ENCODE measurements at regions of chr15 and their contacts with region 1.

Region 1: GRCh38 chr15:74950078-74951000 is 6.2 kb downstream of the RPP25 start:
- DNase-seq: peak; percentile 82
- H3K4me3 ChIP-seq: no peak overlapping the region
- H3K27ac ChIP-seq: no peak overlapping the region
- H3K4me1 ChIP-seq: peaks cover 12% of the 10 kb centered on the region
- H3K27me3 ChIP-seq: no peaks in the 10 kb centered on the region
- CTCF ChIP-seq: peak; percentile 91 to 97
- POLR2A ChIP-seq: no peak

Region 2: GRCh38 chr15:74422650-74423430 is 527.5 kb before region 1 on chr15:
- CTCF ChIA-PET with region 1: no interaction called
- POLR2A ChIA-PET with region 1: no interaction called
- dilution Hi-C with region 1: no loop called
- intact Hi-C with region 1: no loop called
- DNase-seq: no peak
- H3K4me3 ChIP-seq: no peak overlapping the region
- H3K27ac ChIP-seq: no peak overlapping the region
- H3K4me1 ChIP-seq: no peaks in the 10 kb centered on the region
- H3K27me3 ChIP-seq: no peaks in the 10 kb centered on the region
- CTCF ChIP-seq: no peak
- POLR2A ChIP-seq: no peak

Region 3: GRCh38 chr15:74635228-74635627 is 315.1 kb before region 1 on chr15:
- CTCF ChIA-PET with region 1: interaction called, 17 read pairs
- POLR2A ChIA-PET with region 1: no interaction called
- dilution Hi-C with region 1: no loop called
- intact Hi-C with region 1: loop called (anchors 1 kb)
- DNase-seq: peak; percentile 76
- H3K4me3 ChIP-seq: no peak overlapping the region
- H3K27ac ChIP-seq: no peak overlapping the region
- H3K4me1 ChIP-seq: no peaks in the 10 kb centered on the region
- H3K27me3 ChIP-seq: no peaks in the 10 kb centered on the region
- CTCF ChIP-seq: peak; percentile 82 to 89
- POLR2A ChIP-seq: no peak

Region 4: GRCh38 chr15:74799856-74800547 is 150.3 kb before region 1 on chr15:
- CTCF ChIA-PET with region 1: interaction called, 4 read pairs
- POLR2A ChIA-PET with region 1: no interaction called
- dilution Hi-C with region 1: no loop called
- intact Hi-C with region 1: loop called (anchors 1 kb)
- DNase-seq: peak; percentile 52
- H3K4me3 ChIP-seq: no peak overlapping the region
- H3K27ac ChIP-seq: no peak overlapping the region
- H3K4me1 ChIP-seq: no peaks in the 10 kb centered on the region
- H3K27me3 ChIP-seq: no peaks in the 10 kb centered on the region
- CTCF ChIP-seq: peak; percentile 93 to 98
- POLR2A ChIP-seq: no peak

Region 5: DNA sequence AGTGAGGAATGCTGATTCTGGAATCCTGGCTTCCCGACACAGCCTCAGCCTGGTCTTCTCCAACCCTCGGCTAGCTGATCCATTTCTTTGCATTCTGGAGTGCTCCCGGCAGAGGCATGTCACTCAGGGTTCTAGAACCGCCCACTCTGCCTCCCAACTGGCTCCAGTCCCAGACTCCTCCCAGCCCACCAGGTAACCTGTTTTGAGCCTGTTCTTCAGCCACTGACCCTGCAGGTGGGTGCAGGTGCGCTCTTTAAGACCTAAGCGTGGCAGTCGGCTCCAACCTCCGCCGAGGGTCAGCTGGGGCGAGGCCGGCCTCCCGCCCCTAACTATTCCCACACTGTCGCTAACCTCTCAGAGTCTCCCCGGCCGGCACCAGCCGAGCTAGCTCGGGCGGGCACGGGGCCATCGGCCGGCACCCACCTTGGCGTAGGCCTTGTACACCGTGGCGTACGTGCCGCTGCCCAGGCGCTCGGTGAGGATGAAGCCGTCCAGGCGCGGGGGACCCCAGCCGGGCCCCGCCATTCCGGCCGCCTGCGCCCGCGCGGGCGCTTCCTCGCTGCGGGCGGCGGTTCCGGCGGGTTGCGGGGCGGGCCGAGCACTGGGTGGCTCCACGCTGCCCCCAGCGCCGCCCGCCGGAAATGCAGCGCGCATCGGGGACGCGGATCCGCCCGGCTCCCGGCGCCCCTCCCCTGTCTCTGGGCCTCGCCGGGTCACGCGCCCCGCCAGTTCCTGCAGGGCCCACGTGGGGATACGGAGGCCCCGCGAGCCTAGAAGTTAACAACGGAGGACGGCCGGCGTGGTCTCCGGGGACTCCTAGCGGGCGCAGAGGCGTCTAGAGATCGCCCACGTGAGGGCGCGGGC is 107.5 kb before region 1 on chr15 and contains the start of gene ULK3:
- CTCF ChIA-PET with region 1: interaction called, 6 read pairs
- POLR2A ChIA-PET with region 1: no interaction called
- dilution Hi-C with region 1: no loop called
- intact Hi-C with region 1: loop called (anchors 2 kb)
- DNase-seq: peak; percentile 81
- H3K4me3 ChIP-seq: peak within 1 kb of the TSS; percentile 61 to 81 (median 71)
- H3K27ac ChIP-seq: peak within 1 kb of the TSS; percentile 60
- H3K4me1 ChIP-seq: peaks cover 11% of the 10 kb centered on the region
- H3K27me3 ChIP-seq: no peaks in the 10 kb centered on the region
- CTCF ChIP-seq: peak; percentile 36 to 57
- POLR2A ChIP-seq: peak; percentile 88
- total RNA-seq, gene ULK3: 29.0 and 36.0 TPM in 2 replicates

Region 6: GRCh38 chr15:74937596-74938296 is 12.6 kb before region 1 on chr15 and contains the start of gene COX5A:
- CTCF ChIA-PET with region 1: interaction called, 13 read pairs
- POLR2A ChIA-PET with region 1: no interaction called
- dilution Hi-C with region 1: no loop called
- intact Hi-C with region 1: loop called (anchors 1 kb)
- DNase-seq: peak; percentile 98
- H3K4me3 ChIP-seq: peak within 1 kb of the TSS; percentile 92 to 99 (median 99)
- H3K27ac ChIP-seq: peak within 1 kb of the TSS; percentile 60
- H3K4me1 ChIP-seq: peaks cover 7% of the 10 kb centered on the region
- H3K27me3 ChIP-seq: no peaks in the 10 kb centered on the region
- CTCF ChIP-seq: no peak
- POLR2A ChIP-seq: peak; percentile 82
- total RNA-seq, gene COX5A: 220 and 232 TPM in 2 replicates

Region 7: DNA sequence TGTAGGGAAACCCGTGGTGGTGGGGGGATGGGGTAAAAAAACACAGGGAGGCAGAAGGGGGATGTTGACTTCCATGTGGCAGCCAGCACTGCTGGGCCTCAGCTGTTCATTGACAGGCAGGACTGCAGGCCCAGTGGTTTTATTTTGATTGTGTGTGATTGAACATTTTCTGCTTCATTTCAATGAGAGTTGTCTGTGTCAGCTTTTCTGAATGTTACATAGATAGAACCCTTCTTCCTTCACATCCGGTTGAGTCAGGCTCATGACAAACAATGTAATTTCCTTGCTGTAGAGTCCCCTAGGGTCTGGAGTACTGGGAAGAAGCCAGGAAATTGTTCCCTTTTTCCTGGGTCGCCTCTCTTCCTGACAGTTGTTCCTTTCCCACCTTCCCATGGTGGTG is 14.5 kb after region 1 on chr15:
- CTCF ChIA-PET with region 1: interaction called, 22 read pairs
- POLR2A ChIA-PET with region 1: interaction called, 4 read pairs
- dilution Hi-C with region 1: no loop called
- intact Hi-C with region 1: no loop called
- DNase-seq: peak; percentile 73
- H3K4me3 ChIP-seq: no peak overlapping the region
- H3K27ac ChIP-seq: peak overlapping the region; percentile 44
- H3K4me1 ChIP-seq: peaks cover 34% of the 10 kb centered on the region
- H3K27me3 ChIP-seq: no peaks in the 10 kb centered on the region
- CTCF ChIP-seq: no peak
- POLR2A ChIP-seq: no peak

Region 8: GRCh38 chr15:74995241-74995778 is 45.0 kb after region 1 on chr15 and contains the start of gene SCAMP5:
- CTCF ChIA-PET with region 1: interaction called, 15 read pairs
- POLR2A ChIA-PET with region 1: no interaction called
- dilution Hi-C with region 1: no loop called
- intact Hi-C with region 1: no loop called
- DNase-seq: peak; percentile 79
- H3K4me3 ChIP-seq: peak within 1 kb of the TSS; percentile 24 to 75 (median 61)
- H3K27ac ChIP-seq: no peak within 1 kb of the TSS
- H3K4me1 ChIP-seq: peaks cover 15% of the 10 kb centered on the region
- H3K27me3 ChIP-seq: peaks cover 11 to 20% of the 10 kb centered on the region in 2 experiments
- CTCF ChIP-seq: no peak
- POLR2A ChIP-seq: no peak
- total RNA-seq, gene SCAMP5: 1.9 and 4.4 TPM in 2 replicates

Measured in endothelial cell of umbilical vein (primary cell).